Vagina (tissue), 2 donors: ENCODE measurements at regions of chr1 and their contacts with region 1.

Region 1: DNA sequence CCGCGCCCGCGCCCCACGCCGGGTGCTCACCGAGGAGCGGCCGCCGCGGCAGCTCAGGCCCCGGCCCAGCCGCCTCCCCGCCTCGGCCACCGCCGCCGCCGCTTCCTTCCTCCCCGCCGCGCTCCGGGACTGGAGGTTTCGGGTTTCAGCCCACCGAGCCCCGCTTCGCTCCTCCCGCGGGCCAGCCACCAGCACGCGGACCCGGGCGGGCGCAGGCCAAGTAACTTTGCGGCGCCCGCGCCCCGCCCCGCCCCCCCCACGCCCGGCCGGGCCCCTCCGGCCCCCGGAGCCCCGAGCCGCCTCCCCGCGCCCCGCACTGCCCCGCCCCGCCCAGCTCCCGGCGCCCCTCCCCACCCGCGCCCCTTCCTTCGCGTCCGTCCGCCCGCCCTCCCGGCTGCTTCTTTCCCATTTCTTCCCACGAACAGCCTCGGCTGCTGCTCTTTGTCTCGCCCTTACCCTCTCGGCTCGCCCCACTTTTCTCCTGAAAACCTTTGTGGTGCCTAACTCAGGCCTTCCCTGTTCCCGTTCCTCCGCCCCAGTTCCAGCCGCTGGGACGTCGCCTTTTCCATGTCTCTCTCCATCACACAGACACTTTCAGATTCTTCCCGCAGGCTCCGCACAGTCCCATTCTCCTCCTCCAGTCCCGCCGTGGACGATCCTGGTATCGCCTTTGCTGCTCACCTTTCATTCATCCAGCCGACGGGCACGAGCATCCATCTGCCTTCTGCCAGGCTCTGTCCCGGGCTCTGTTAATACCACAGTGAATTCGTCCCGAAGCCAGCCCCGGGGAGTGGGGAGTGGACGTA is at the start of gene GPR161:
- DNase-seq: peak in 1 of 2 donors; percentile 88
- H3K4me3 ChIP-seq: peak within 1 kb of the TSS; percentile 75 to 77
- H3K27ac ChIP-seq: peak within 1 kb of the TSS; percentile 84
- H3K4me1 ChIP-seq: peaks cover 32% of the 10 kb centered on the region
- H3K27me3 ChIP-seq: no peaks in the 10 kb centered on the region
- CTCF ChIP-seq: no peak
- POLR2A ChIP-seq: peak in 1 of 2 donors; percentile 14
- total RNA-seq, gene GPR161: 15.7 TPM

Region 2: GRCh38 chr1:167221713-167222610 is 915.0 kb before region 1 on chr1:
- intact Hi-C with region 1: no loop called
- DNase-seq: peak in 1 of 2 donors; percentile 92
- H3K4me3 ChIP-seq: peak overlapping the region; percentile 69 to 95
- H3K27ac ChIP-seq: peak overlapping the region; percentile 100
- H3K4me1 ChIP-seq: peaks cover 37% of the 10 kb centered on the region
- H3K27me3 ChIP-seq: no peaks in the 10 kb centered on the region
- CTCF ChIP-seq: peak in 1 of 3 experiments; percentile 4
- POLR2A ChIP-seq: peak in 1 of 2 donors; percentile 55

Region 3: DNA sequence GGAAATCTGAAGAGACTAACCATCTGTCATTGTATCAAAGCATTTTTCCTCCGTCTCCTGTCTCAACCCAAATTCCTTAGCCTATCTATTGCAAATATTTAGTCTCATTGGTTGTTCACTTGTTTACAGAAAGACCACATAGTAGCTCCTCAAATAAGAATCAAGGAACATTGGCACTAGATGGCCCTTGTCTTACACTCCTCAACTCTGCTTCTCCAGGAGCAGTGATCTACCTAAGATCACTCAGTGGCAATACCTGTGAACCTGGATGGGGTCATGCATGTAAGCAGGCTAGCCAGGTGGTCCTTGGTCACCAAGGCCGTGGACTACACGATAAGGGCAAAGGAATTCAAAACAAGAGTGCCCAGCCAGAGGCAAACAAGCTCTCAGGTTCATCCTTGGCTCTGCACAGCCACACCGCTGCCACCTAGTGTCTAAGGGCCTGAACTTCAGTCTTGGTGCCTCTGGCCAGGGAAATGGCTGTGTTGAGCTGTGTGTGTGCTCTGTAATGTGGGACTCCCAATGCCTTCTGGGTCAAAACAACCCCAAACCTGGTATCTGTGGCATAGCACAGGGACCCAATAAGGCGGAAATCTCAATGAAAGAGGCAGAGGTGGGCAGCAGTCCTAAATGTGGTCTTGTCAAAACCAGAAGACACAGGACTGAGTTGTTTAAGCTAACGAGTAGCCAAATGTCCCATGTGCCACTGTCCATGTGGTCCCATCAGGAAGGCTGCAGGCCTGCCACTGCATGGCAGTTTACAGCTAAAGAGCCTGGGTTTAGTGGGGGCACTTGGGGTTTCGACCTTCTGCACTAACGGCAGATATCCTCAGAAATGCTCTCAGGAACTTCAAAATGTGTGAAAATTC is 54.7 kb before region 1 on chr1:
- intact Hi-C with region 1: loop called (anchors 10 kb)
- DNase-seq: peak in 1 of 2 donors; percentile 88
- H3K4me3 ChIP-seq: no peak overlapping the region
- H3K27ac ChIP-seq: peak overlapping the region; percentile 36
- H3K4me1 ChIP-seq: peaks cover 18% of the 10 kb centered on the region
- H3K27me3 ChIP-seq: no peaks in the 10 kb centered on the region
- CTCF ChIP-seq: peak; percentile 8 to 65 (median 63)
- POLR2A ChIP-seq: no peak

Region 4: DNA sequence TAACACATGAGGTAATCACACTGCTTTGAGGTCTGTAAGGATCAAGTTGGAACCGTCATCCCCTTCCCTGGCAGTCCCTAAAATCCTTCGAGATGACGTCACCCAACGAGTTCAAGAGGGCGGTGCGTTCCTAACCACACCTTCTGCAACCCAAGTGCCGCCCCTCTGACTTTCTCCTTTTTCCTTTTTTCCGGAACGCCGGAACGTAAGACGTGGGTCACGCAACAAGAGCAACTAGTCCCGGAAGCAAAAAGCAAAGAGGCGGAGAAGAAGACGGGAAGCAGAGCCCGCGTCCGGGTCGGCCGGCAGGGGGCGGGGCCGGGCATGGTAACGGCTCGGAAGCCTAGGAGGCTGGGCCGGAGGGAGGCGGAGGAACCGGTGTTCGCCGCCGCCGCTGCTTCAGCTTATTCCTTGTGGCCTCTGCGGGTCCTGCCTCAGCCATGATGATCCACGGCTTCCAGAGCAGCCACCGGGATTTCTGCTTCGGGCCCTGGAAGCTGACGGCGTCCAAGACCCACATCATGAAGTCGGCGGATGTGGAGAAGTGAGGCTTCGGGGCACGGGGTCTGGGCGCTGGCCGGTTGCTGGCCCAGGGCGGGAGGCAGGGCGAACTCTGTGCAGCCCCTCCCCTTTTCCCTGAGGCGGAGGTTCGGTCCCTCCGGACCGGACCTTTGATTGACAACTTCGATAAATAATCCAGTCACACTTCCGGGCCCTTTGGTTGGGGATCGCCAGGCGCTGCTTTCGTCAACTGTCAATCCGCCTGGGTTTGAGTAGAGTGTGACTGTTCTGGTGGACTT is 41.9 kb after region 1 on chr1 and contains the start of gene TIPRL:
- intact Hi-C with region 1: loop called (anchors 5 kb)
- DNase-seq: peak; percentile 97 to 99
- H3K4me3 ChIP-seq: peak within 1 kb of the TSS; percentile 71 to 93
- H3K27ac ChIP-seq: peak within 1 kb of the TSS; percentile 91
- H3K4me1 ChIP-seq: peaks cover 26% of the 10 kb centered on the region
- H3K27me3 ChIP-seq: no peaks in the 10 kb centered on the region
- CTCF ChIP-seq: peak; percentile 19 to 62 (median 40)
- POLR2A ChIP-seq: peak in 1 of 2 donors; percentile 81
- total RNA-seq, gene TIPRL: 20.4 TPM